Activated CD4-positive, alpha-beta T cell treated with anti-CD3 and anti-CD28 coated beads, Interleukin-2, amount 10 ng/mL, durations not matched to agents 24 days and 14 days (primary cell): ENCODE measurements at regions of chr14 and their contacts with region 1.

Region 1: GRCh38 chr14:92960711-92961549 is 38.0 kb downstream of the CHGA start:
- DNase-seq: no peak
- H3K4me3 Mint-ChIP-seq: no peak overlapping the region
- H3K27ac Mint-ChIP-seq: no peak overlapping the region
- H3K4me1 Mint-ChIP-seq: no peaks in the 10 kb centered on the region
- H3K27me3 Mint-ChIP-seq: no peaks in the 10 kb centered on the region

Region 2: DNA sequence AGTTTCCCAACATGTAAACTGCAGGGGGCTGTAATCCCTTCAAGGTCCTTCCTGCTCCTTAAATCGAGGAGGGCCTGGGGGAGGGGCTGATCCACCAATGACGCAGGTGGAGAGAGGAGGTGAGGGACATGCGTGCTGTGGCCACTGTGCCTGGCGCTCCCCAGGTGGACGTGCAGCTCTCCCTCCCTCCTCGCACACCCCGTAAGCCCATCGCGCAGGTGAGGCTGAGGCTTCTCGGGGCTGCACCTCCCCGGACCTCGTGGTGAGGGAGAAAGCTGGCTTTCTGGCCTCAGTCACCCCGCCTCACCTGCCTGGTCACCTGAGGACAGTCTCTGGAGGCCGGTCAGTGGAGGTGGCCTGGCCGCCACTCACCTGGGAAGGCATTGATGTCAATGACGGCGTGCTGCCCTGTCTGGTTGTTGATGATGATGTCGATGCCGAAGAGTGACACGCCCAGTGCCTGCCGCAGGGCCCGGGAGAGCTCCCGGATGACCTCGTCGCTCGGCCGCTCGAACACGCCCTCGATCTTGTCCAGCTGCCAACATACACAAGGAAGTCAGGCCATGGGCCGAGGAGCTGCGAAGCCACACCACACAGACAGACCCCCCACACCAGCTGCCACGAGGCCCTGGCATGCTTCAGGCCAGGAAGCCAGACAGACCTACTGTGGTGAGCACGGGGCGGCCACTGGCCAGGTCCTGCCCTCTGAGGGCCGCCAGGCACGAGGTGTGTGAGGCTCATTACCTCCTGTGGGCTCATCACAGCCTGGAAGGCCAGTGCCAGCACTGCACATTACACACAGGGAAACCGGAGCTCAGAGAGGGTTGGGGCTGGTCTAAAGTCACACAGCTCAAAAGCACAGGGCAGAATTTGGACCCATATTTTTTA is 14.7 kb before region 1 on chr14:
- intact Hi-C with region 1: no loop called
- DNase-seq: no peak
- H3K4me3 Mint-ChIP-seq: no peak overlapping the region
- H3K27ac Mint-ChIP-seq: no peak overlapping the region
- H3K4me1 Mint-ChIP-seq: no peaks in the 10 kb centered on the region
- H3K27me3 Mint-ChIP-seq: no peaks in the 10 kb centered on the region

Region 3: GRCh38 chr14:93012951-93013719 is 52.2 kb after region 1 on chr14:
- intact Hi-C with region 1: loop called (anchors 10 kb)
- DNase-seq: no peak
- H3K4me3 Mint-ChIP-seq: no peak overlapping the region
- H3K27ac Mint-ChIP-seq: peak overlapping the region; percentile 81
- H3K4me1 Mint-ChIP-seq: peaks cover 21% of the 10 kb centered on the region
- H3K27me3 Mint-ChIP-seq: no peaks in the 10 kb centered on the region

Region 4: DNA sequence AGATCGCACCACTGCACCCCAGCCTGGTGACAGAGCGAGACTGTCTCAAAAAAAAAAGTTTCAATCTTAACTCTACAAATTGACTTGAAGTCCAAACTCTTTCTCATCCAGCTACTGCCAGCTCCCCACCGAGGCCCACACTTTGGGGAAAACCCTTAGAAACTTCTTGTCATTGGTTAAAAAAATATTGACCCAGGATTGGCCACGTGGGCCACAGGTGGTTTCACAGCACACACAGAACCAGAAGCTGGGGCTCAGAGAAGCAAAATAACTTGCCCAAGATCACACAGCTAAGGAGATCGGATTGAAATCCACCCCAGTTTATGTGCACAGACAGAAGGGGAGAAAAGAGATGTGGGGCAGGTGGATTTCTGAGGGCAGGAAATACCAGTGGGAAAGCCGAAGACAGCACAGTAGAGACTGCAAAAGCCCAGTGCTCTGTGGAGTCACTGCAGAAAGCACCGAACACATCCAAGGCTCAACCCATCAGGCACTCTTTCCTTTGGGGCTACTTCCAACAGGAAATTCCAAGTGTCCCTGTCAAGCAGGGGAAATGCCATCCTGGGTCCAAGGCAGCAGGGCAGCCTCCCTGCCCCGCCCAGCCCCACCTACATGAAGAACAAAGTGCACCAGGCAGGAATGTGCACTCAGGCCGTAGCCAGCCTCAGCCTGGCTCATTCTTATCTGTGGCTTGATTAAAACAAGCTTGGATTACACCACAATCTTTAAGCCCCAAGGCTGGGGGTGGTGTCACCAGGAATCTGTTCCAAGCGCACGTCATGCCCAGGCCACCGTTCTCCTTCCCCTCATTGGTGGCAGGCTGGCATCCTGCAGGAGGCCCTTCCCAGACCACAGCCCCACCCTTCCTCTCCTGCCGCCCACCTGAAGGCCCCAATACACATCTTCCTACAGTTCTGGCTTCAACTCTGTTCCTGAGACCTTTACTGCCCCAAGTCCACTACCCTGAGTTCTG is 82.3 kb after region 1 on chr14:
- intact Hi-C with region 1: no loop called
- DNase-seq: no peak
- H3K4me3 Mint-ChIP-seq: no peak overlapping the region
- H3K27ac Mint-ChIP-seq: no peak overlapping the region
- H3K4me1 Mint-ChIP-seq: peaks cover 30% of the 10 kb centered on the region
- H3K27me3 Mint-ChIP-seq: no peaks in the 10 kb centered on the region